Heart right ventricle (tissue), 16 donors: ENCODE measurements at regions of chr6 and their contacts with region 1.

Region 1: DNA sequence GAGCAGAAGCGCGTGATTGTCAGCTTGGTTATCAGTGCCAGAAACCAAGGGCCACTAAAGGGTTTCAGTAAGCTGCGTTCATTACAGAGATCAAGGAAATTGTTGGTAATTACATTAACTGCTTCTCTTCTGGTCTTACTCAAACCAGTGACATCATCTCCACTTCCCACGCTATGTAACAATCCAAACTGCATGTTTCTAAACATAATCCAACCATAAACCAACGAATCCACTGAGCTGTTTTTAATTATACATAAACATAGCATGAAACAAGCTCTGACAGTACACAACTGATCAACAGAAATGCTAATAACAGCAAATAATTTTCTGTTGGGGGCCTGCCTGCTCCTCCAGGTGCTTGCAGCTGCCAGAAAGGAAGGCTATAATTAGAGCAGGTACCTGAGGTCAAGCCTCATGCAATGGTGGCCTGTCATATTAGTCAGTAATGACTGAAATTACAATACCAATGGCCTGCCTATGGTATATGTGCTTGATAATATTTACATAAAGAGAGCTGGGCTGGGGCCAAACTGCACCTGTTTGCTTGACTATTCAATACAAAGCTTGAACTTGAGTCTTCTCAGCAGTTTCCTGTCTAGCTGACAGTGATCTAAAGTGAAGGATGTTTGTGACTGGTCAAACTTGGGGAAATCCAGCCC is 40.1 kb downstream of the ILRUN start:
- DNase-seq: peak in 1 of 2 donors; percentile 25
- ATAC-seq: peak; percentile 23 to 72 (median 59)
- H3K4me3 ChIP-seq: peak overlapping the region in 9 of 10 donors; percentile 28 to 55 (median 49)
- H3K27ac ChIP-seq: peak overlapping the region; percentile 83 to 96 (median 92)
- H3K4me1 ChIP-seq: peaks cover 11 to 65% (median 43%) of the 10 kb centered on the region in 9 donors
- H3K27me3 ChIP-seq: no peaks in the 10 kb centered on the region
- CTCF ChIP-seq: no peak

Region 2: GRCh38 chr6:34696739-34697543 is 40.4 kb after region 1 on chr6 and contains the start of gene ILRUN:
- intact Hi-C with region 1: loop called in 6 of 10 experiments (anchors 2 to 5 kb)
- DNase-seq: peak; percentile 96 to 98
- ATAC-seq: peak; percentile 94 to 98 (median 96)
- H3K4me3 ChIP-seq: peak within 1 kb of the TSS; percentile 89 to 100 (median 96)
- H3K27ac ChIP-seq: peak within 1 kb of the TSS; percentile 91 to 99 (median 97)
- H3K4me1 ChIP-seq: peaks cover 5 to 44% (median 30%) of the 10 kb centered on the region in 9 donors
- H3K27me3 ChIP-seq: no peaks in the 10 kb centered on the region
- CTCF ChIP-seq: no peak
- total RNA-seq, gene ILRUN: 86.9 to 157 (median 114) TPM

Region 3: GRCh38 chr6:34729631-34730470 is 73.3 kb after region 1 on chr6:
- intact Hi-C with region 1: no loop called
- DNase-seq: no peak
- ATAC-seq: no peak
- H3K4me3 ChIP-seq: no peak overlapping the region
- H3K27ac ChIP-seq: no peak overlapping the region
- H3K4me1 ChIP-seq: no peaks in the 10 kb centered on the region
- H3K27me3 ChIP-seq: no peaks in the 10 kb centered on the region
- CTCF ChIP-seq: no peak

Region 4: DNA sequence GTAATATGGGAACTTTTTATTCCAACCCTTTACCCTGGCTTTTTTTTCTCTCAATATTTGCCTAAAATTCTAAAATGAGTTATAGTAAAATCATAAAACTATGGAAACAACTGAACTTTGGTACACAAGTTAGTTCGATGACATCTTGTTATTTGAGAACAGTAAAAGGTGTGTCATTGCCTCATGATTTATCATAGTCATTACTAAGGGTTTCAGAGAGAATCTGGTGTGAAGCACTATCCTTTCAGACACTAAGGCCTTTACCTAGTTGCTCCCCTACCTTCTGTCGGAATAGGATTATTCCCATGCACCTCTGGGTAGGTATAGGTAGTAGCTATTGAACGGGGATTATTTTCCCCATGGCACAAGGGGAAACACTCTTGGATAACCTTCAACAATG is 220.0 kb after region 1 on chr6:
- intact Hi-C with region 1: no loop called
- DNase-seq: no peak
- ATAC-seq: no peak
- H3K4me3 ChIP-seq: no peak overlapping the region
- H3K27ac ChIP-seq: no peak overlapping the region
- H3K4me1 ChIP-seq: no peaks in the 10 kb centered on the region
- H3K27me3 ChIP-seq: no peaks in the 10 kb centered on the region
- CTCF ChIP-seq: no peak